SK-N-SH (cell line): ENCODE measurements at regions of chr4 and their contacts with region 1.

Region 1: DNA sequence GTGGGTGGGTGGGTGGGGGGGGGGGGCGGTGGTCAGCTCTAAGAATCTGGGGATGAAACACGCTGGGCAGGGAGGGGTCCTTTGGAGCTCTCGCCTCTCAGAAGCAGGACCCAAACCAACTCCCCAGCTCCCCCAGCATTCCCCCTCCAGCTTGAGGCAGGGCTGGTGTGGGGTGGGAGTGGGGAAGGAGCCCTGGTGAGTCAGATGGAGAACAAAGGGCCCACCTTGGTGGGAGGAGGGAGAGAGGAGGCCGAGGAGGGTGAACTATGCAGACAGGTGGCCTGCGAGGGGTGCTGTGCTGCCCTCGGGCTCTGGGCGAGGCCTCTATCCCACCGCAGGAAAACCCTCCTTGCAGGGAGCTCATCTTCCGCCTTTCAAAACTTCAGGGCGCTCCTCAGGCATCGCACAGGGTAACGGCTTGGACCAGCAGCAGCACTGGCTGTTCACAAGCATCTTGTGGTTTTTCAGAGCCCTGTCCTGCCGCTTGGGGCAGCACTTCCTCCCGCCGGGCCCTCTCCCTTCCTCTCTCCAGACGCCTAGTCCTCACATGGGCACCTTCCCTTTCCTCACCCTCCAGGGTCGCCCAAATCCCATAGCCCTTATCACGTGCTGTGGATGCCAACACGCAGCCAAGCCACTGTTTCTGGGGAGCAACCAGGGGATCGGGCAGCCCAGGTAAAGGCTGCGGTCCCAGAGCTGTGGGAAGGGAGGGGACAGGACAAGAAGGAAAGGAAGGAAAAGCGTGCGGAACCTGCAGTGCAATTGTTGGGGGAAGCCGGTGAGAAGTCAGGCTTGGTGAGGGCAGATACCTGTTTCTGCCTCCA is 34.0 kb upstream of the GRPEL1 start:
- DNase-seq: peak; percentile 87
- H3K4me3 ChIP-seq: peak overlapping the region; percentile 68 to 82
- H3K27ac ChIP-seq: peak overlapping the region in 1 of 2 experiments; percentile 44; a peak in 1 of 4 replicates
- H3K4me1 ChIP-seq: peaks cover 7 to 21% of the 10 kb centered on the region in 2 experiments; a peak in 2 of 4 replicates
- H3K27me3 ChIP-seq: no peaks in the 10 kb centered on the region
- CTCF ChIP-seq: peak; percentile 77
- EP300 ChIP-seq: no peak
- RAD21 ChIP-seq: peak; percentile 45

Region 2: DNA sequence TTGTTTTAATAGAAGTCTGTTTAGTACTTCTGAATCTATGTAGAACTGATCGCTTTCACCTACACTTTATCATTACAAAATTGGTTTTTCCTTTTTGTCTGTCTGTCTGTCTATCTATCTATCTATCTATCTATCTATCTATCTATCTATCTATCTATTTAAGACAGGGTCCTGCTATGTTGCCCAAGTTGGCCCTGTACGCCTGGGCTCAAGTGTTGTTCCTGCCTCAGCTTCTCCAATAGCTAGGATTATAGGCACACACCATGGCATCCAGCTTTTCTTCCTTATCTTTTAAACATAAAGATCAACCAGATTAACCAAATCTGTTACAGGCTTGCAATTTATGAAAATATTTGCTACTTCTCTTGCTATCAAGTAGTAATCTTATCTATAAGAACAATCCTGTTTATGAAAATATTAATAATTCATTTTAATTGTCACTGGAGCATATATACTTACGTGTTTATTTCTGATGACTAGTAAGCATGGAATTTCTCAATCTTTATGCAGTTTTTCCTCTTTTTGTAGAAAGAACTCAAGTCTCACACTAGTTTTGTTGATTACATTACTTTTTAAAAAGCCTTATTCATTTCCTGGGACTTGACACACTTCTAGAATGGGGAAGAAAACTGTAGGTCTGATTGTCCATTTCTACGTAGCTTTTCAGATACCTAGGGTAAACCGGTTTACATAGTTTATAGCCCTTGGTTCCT is 294.8 kb before region 1 on chr4:
- CTCF ChIA-PET with region 1: no interaction called
- POLR2A ChIA-PET with region 1: no interaction called
- DNase-seq: no peak
- H3K4me3 ChIP-seq: no peak overlapping the region
- H3K27ac ChIP-seq: peak overlapping the region in 1 of 2 experiments; percentile 74; a peak in 2 of 4 replicates
- H3K4me1 ChIP-seq: peaks cover 0 to 12% of the 10 kb centered on the region in 2 experiments; a peak in 2 of 4 replicates
- H3K27me3 ChIP-seq: no peaks in the 10 kb centered on the region
- CTCF ChIP-seq: no peak
- EP300 ChIP-seq: no peak
- RAD21 ChIP-seq: no peak

Region 3: DNA sequence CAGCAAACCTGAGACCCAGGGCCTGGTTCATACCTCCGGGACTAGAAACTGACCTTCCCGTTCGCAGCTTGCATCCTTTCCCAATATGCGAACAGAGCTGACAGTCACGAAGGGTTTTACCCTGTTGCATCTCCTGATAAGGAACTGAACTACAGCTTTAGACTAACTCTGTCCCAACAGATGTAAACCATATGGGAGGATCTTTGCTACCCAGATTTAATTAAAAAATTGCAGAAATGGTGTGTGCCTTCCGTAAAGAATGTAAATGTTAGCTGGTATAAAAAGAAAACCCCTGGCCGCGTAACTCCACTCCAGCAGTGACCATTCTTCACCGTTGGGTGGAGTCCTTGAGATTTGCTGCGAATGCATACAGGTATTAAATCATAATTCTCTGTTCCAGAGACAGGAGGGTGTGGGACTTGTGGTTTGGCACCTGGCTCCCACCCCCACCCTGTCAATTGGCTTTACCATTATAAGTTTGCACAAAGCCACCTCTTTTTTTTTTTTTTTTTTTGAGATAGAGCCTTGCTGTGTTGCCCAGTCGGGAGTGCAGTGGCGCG is 49.8 kb after region 1 on chr4:
- CTCF ChIA-PET with region 1: interaction called, 13 read pairs
- POLR2A ChIA-PET with region 1: no interaction called
- DNase-seq: peak; percentile 74
- H3K4me3 ChIP-seq: no peak overlapping the region; a peak in 1 of 4 replicates
- H3K27ac ChIP-seq: no peak overlapping the region
- H3K4me1 ChIP-seq: peaks cover 0 to 23% of the 10 kb centered on the region in 2 experiments; a peak in 2 of 4 replicates
- H3K27me3 ChIP-seq: peaks cover 32% of the 10 kb centered on the region
- CTCF ChIP-seq: peak; percentile 60
- EP300 ChIP-seq: no peak
- RAD21 ChIP-seq: peak; percentile 77

Region 4: GRCh38 chr4:7232061-7232650 is 130.3 kb after region 1 on chr4:
- CTCF ChIA-PET with region 1: no interaction called
- POLR2A ChIA-PET with region 1: no interaction called
- DNase-seq: no peak
- H3K4me3 ChIP-seq: no peak overlapping the region
- H3K27ac ChIP-seq: no peak overlapping the region
- H3K4me1 ChIP-seq: peaks cover 0 to 6% of the 10 kb centered on the region in 2 experiments; a peak in 1 of 4 replicates
- H3K27me3 ChIP-seq: no peaks in the 10 kb centered on the region
- CTCF ChIP-seq: no peak
- EP300 ChIP-seq: no peak
- RAD21 ChIP-seq: no peak

Region 5: GRCh38 chr4:7266525-7267292 is 164.8 kb after region 1 on chr4:
- CTCF ChIA-PET with region 1: no interaction called
- POLR2A ChIA-PET with region 1: no interaction called
- DNase-seq: no peak
- H3K4me3 ChIP-seq: no peak overlapping the region
- H3K27ac ChIP-seq: no peak overlapping the region
- H3K4me1 ChIP-seq: no peaks in the 10 kb centered on the region; a peak in 1 of 4 replicates
- H3K27me3 ChIP-seq: no peaks in the 10 kb centered on the region
- CTCF ChIP-seq: no peak
- EP300 ChIP-seq: no peak
- RAD21 ChIP-seq: no peak